HepG2 (cell line): ENCODE measurements at regions of chr10 and their contacts with region 1.

Region 1: DNA sequence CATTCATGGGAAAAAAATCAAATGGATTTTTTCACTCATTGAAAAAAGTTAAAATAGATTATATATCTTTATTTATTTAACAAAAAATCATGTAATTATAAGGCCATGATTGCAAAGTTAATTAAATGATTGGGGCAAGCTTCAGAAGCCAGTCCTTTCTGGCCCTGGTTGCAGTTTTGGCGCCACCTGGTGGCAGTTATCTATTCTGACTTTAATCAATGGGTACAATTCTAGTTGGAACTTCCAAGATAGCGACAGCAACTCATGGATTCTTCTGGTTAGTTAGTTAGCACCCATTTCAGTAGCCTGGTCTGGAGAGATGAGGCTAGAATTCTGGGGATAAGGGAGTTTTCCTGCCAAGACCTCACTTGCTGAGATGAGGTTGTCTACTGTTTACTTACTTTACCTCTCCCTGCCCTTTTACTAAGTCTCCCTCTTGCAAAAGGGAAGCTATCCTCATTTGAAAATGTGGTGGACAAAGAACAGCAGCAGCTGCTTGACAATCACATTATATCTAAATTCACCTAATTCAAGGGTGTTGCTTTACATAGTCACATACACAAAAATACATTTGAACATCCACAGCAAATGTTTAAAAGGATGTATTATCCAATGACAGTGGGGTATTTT is 42.3 kb downstream of the NOC3L start:
- DNase-seq: peak; percentile 53
- ATAC-seq: peak; percentile 29; the same call in 1 of the 3 replicates
- H3K4me3 ChIP-seq: no peak overlapping the region
- H3K27ac ChIP-seq: no peak overlapping the region
- H3K4me1 ChIP-seq: peaks cover 11% of the 10 kb centered on the region
- H3K27me3 ChIP-seq: no peaks in the 10 kb centered on the region
- CTCF ChIP-seq: peak; percentile 81
- EP300 ChIP-seq: no peak
- POLR2A ChIP-seq: no peak
- RAD21 ChIP-seq: peak; percentile 63

Region 2: GRCh38 chr10:93916257-93917063 is 403.9 kb before region 1 on chr10:
- CTCF ChIA-PET with region 1: interaction called, 15 read pairs
- POLR2A ChIA-PET with region 1: no interaction called
- in situ Hi-C with region 1: loop called (anchors 5 kb)
- intact Hi-C with region 1: loop called (anchors 1 kb)
- DNase-seq: peak; percentile 34
- ATAC-seq: peak; percentile 77
- H3K4me3 ChIP-seq: peak overlapping the region in 2 of 3 experiments; percentile 9 to 42; a peak in 2 of 6 replicates
- H3K27ac ChIP-seq: no peak overlapping the region
- H3K4me1 ChIP-seq: peaks cover 10% of the 10 kb centered on the region; the same call in 1 of the 2 replicates
- H3K27me3 ChIP-seq: no peaks in the 10 kb centered on the region; a peak in 1 of 5 replicates
- CTCF ChIP-seq: peak; percentile 68
- EP300 ChIP-seq: no peak
- POLR2A ChIP-seq: no peak
- RAD21 ChIP-seq: no peak

Region 3: GRCh38 chr10:94076321-94076841 is 244.0 kb before region 1 on chr10:
- CTCF ChIA-PET with region 1: no interaction called
- POLR2A ChIA-PET with region 1: no interaction called
- in situ Hi-C with region 1: no loop called
- intact Hi-C with region 1: loop called (anchors 2 kb)
- DNase-seq: peak; percentile 39
- ATAC-seq: peak; percentile 94
- H3K4me3 ChIP-seq: no peak overlapping the region
- H3K27ac ChIP-seq: no peak overlapping the region
- H3K4me1 ChIP-seq: peaks cover 11% of the 10 kb centered on the region
- H3K27me3 ChIP-seq: no peaks in the 10 kb centered on the region
- CTCF ChIP-seq: peak; percentile 55
- EP300 ChIP-seq: no peak
- POLR2A ChIP-seq: no peak
- RAD21 ChIP-seq: peak; percentile 18; the same call in 1 of the 2 replicates

Region 4: GRCh38 chr10:94225589-94225988 is 94.8 kb before region 1 on chr10:
- CTCF ChIA-PET with region 1: no interaction called
- POLR2A ChIA-PET with region 1: no interaction called
- in situ Hi-C with region 1: no loop called
- intact Hi-C with region 1: no loop called
- DNase-seq: no peak
- ATAC-seq: no peak
- H3K4me3 ChIP-seq: no peak overlapping the region
- H3K27ac ChIP-seq: no peak overlapping the region
- H3K4me1 ChIP-seq: peaks cover 12% of the 10 kb centered on the region
- H3K27me3 ChIP-seq: no peaks in the 10 kb centered on the region
- CTCF ChIP-seq: 0 out of 2 replicates have a peak, but pooled peaks have one; percentile 9
- EP300 ChIP-seq: no peak
- POLR2A ChIP-seq: no peak
- RAD21 ChIP-seq: no peak

Region 5: GRCh38 chr10:94279835-94280709 is 40.3 kb before region 1 on chr10:
- CTCF ChIA-PET with region 1: interaction called, 20 read pairs
- POLR2A ChIA-PET with region 1: no interaction called
- in situ Hi-C with region 1: no loop called
- intact Hi-C with region 1: loop called (anchors 1 kb)
- DNase-seq: peak; percentile 29
- ATAC-seq: peak; percentile 91
- H3K4me3 ChIP-seq: no peak overlapping the region
- H3K27ac ChIP-seq: no peak overlapping the region
- H3K4me1 ChIP-seq: no peaks in the 10 kb centered on the region
- H3K27me3 ChIP-seq: no peaks in the 10 kb centered on the region
- CTCF ChIP-seq: peak; percentile 89
- EP300 ChIP-seq: no peak
- POLR2A ChIP-seq: no peak
- RAD21 ChIP-seq: peak; percentile 78

Region 6: GRCh38 chr10:94308866-94309265 is 11.5 kb before region 1 on chr10:
- CTCF ChIA-PET with region 1: no interaction called
- POLR2A ChIA-PET with region 1: no interaction called
- in situ Hi-C with region 1: no loop called
- intact Hi-C with region 1: no loop called
- DNase-seq: no peak
- ATAC-seq: no peak
- H3K4me3 ChIP-seq: no peak overlapping the region
- H3K27ac ChIP-seq: no peak overlapping the region
- H3K4me1 ChIP-seq: peaks cover 31% of the 10 kb centered on the region
- H3K27me3 ChIP-seq: no peaks in the 10 kb centered on the region; a peak in 1 of 5 replicates
- CTCF ChIP-seq: no peak
- EP300 ChIP-seq: no peak
- POLR2A ChIP-seq: no peak
- RAD21 ChIP-seq: no peak